Activated B cell treated with CpG ODN at 0.5 μM for 24 hours (primary cell): ENCODE measurements at regions of chr5 and their contacts with region 1.

Region 1: DNA sequence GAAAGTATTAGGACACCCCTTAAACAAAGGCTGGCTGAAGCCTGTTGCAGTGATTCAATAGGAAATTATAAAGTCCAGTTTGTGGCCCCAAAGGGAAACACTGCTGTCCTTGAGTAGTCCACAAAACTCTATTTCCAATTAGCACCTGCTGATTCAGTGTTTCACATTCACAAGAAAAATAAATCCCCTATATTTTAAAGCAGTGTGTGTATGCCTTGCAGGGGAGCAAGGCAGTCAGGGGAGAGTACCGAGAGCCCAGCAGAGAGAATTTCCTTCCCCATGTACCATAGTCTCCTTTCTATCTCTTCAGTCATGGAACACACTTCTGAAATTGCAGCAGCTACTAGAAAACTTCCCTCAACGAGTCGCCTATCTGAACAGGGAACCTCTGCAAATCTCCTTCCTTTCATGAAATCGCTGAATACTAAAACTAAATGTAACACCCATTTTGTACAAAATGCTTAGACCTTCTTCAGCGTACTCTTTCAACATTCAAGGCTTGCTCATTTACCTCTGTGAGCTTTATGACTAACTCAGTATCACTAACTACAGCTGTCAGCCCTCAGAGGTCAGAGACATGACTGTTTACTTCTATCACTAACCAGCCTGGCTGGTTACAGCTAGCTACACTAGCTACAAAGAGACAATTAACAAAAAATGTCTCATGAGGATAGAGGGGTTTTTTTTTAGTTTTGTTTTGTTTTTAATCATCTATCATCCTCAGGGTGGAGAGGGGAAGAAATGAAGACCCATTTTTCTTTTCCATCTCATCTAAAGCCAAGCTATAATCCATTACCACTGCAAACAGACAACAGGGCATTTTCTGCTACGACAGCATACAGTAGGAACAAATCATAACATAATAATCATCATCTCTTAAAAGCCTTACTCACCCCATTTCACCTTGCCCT is 188.7 kb downstream of the EBF1 start:
- DNase-seq: no peak
- ATAC-seq: peak; percentile 72
- H3K4me3 Mint-ChIP-seq: peak overlapping the region; percentile 61
- H3K27ac Mint-ChIP-seq: peak overlapping the region; percentile 74
- H3K4me1 Mint-ChIP-seq: peaks cover 97% of the 10 kb centered on the region
- H3K27me3 Mint-ChIP-seq: no peaks in the 10 kb centered on the region
- CTCF ChIP-seq: no peak

Region 2: GRCh38 chr5:158695595-158696330 is 215.3 kb before region 1 on chr5:
- CTCF ChIA-PET with region 1: no interaction called
- POLR2A ChIA-PET with region 1: no interaction called
- intact Hi-C with region 1: no loop called
- DNase-seq: peak; percentile 76
- ATAC-seq: peak; percentile 96
- H3K4me3 Mint-ChIP-seq: no peak overlapping the region
- H3K27ac Mint-ChIP-seq: peak overlapping the region; percentile 73
- H3K4me1 Mint-ChIP-seq: peaks cover 26% of the 10 kb centered on the region
- H3K27me3 Mint-ChIP-seq: no peaks in the 10 kb centered on the region
- CTCF ChIP-seq: peak; percentile 92

Region 3: DNA sequence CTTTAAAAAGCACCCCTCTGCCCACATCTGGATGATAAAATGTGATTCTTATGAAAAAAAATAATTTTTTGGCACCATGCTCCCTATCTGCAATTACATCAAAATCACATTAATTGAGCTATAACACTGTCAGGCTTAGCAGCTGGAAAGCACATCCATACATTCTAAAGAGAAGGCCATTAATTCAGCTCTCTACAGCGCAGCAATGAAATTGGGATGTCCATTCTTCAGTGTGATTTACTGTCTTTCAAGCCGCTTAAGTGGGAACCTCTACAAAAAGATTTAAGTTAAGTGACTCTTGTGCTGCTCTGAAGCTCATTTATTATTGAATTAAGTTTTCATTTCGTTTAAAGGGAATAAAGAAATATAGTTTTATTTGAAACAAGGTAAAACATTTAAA is 17.4 kb after region 1 on chr5:
- CTCF ChIA-PET with region 1: interaction called, 3 read pairs
- POLR2A ChIA-PET with region 1: no interaction called
- intact Hi-C with region 1: loop called (anchors 2 kb)
- DNase-seq: no peak
- ATAC-seq: no peak
- H3K4me3 Mint-ChIP-seq: no peak overlapping the region
- H3K27ac Mint-ChIP-seq: peak overlapping the region; percentile 41
- H3K4me1 Mint-ChIP-seq: peaks cover 70% of the 10 kb centered on the region
- H3K27me3 Mint-ChIP-seq: no peaks in the 10 kb centered on the region
- CTCF ChIP-seq: no peak